A549 (cell line): ENCODE measurements at regions of chr5 and their contacts with region 1.

Region 1: GRCh38 chr5:119411935-119412602 is 40.2 kb upstream of the HSD17B4 start:
- DNase-seq: peak; percentile 67 to 78
- ATAC-seq: peak; percentile 97 to 98
- H3K4me3 ChIP-seq: peak overlapping the region; percentile 49
- H3K27ac ChIP-seq: peak overlapping the region; percentile 73 to 85
- H3K4me1 ChIP-seq: peaks cover 14% of the 10 kb centered on the region; the same call in 2 of the 3 replicates
- CTCF ChIP-seq: peak; percentile 99
- EP300 ChIP-seq: no peak
- POLR2A ChIP-seq: no peak
- RAD21 ChIP-seq: peak; percentile 94 to 97

Region 2: DNA sequence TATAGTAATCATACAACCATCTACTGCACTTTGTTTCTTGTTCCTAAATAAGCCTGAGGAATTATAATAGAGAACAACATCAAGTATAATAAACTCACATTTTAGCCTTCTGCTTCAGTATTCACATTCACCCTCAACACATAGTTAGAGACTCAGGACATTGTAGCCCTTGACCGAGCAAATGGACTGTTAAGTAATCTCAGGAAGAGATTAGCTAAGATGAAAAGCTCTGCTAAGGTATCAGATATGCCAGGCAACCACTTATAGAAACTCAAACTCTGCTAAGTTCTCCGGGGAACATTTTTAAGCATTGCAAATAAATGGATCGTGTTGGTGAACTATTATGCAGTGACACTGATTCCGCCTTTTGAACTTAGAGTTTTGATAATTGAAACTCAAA is 675.7 kb before region 1 on chr5:
- CTCF ChIA-PET with region 1: no interaction called
- POLR2A ChIA-PET with region 1: no interaction called
- DNase-seq: no peak
- ATAC-seq: no peak
- H3K4me3 ChIP-seq: no peak overlapping the region
- H3K27ac ChIP-seq: no peak overlapping the region
- H3K4me1 ChIP-seq: no peaks in the 10 kb centered on the region
- CTCF ChIP-seq: no peak
- EP300 ChIP-seq: no peak
- POLR2A ChIP-seq: no peak
- RAD21 ChIP-seq: no peak

Region 3: DNA sequence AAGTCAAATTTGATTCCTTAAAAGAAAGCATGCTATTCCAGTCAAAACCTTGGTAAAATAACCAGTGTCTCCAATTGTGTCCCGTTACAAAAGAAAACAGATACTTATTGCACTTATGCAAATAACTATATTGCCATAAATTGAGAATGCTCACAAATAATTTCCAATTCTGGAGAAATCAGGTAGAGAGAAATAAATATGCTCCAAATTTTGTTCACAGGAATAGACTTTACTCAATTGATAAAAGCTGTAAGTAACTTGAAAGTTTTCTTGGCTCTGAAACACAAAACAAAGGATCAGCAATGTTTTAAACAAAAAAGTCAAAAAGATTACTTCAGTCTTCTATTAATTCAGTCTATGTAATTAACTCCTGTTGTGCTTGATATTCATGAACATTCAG is 416.0 kb before region 1 on chr5:
- CTCF ChIA-PET with region 1: interaction called, 173 read pairs
- POLR2A ChIA-PET with region 1: no interaction called
- DNase-seq: no peak
- ATAC-seq: no peak
- H3K4me3 ChIP-seq: no peak overlapping the region
- H3K27ac ChIP-seq: no peak overlapping the region
- H3K4me1 ChIP-seq: no peaks in the 10 kb centered on the region
- CTCF ChIP-seq: no peak
- EP300 ChIP-seq: no peak
- POLR2A ChIP-seq: no peak
- RAD21 ChIP-seq: no peak

Region 4: DNA sequence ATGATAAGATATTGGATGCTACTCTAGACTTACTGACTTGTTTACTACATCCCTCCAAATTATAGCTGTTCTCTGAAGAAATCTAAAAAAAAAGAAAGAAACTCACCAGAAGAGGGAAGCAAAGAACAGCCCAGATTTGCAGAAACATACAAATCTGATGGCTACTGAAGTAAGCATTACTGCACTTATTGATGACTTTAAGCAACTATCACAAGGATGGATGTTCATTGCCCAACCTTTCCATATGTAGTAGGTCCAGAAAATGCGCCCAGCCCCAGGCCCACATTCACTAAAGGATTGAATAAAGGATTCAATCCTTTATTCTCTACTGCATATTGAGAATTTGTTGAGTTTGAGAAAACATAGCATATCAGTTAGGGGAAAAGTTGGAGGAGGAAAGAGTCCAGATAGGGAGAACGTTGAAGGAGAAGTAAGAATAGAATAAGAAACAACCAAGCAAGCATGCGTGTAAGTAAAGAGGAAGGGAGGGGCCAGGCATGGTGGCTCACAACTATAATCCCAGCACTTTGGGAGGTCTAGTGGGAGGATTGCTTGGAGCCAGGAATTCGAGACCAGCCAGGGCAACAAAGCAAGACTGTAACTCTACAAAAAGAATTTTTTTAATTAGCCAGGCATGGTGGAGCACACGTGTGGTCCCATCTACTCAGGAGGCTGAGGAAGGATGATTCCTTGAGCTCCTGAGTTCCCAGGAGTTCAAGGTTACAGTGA is 389.9 kb before region 1 on chr5:
- CTCF ChIA-PET with region 1: interaction called, 47 read pairs
- POLR2A ChIA-PET with region 1: no interaction called
- DNase-seq: peak; percentile 18 to 55
- ATAC-seq: peak; percentile 84 to 90
- H3K4me3 ChIP-seq: no peak overlapping the region
- H3K27ac ChIP-seq: no peak overlapping the region
- H3K4me1 ChIP-seq: peaks cover 14% of the 10 kb centered on the region
- CTCF ChIP-seq: peak; percentile 71
- EP300 ChIP-seq: no peak
- POLR2A ChIP-seq: no peak
- RAD21 ChIP-seq: peak; percentile 83 to 85

Region 5: DNA sequence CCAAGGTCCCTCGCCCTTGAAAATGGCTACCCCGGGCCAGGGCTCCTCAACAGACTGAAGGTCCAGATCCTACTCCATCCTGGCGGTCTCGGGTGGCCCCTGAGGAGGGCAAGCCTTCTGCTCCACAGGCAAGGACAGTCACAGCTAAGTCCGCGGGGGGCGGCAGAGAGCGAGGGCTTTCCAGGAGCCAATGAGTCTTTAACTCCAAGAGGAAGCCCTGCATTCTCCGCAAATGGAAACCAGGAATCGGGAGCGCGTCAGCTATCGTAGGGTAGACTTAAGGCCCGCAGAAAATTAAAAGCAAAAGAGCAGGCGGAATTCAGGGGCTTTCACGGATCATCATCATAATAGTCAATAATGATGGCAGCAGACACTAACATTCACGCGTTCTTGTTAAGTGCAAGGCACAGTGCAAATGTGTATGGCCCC is 144.1 kb before region 1 on chr5:
- CTCF ChIA-PET with region 1: interaction called, 10 read pairs
- POLR2A ChIA-PET with region 1: interaction called, 5 read pairs
- DNase-seq: peak; percentile 46 to 84
- ATAC-seq: peak; percentile 77 to 79
- H3K4me3 ChIP-seq: peak overlapping the region; percentile 69
- H3K27ac ChIP-seq: peak overlapping the region; percentile 86 to 93
- H3K4me1 ChIP-seq: peaks cover 34% of the 10 kb centered on the region
- CTCF ChIP-seq: no peak
- EP300 ChIP-seq: no peak
- POLR2A ChIP-seq: no peak
- RAD21 ChIP-seq: no peak

Region 6: GRCh38 chr5:119322948-119323537 is 89.0 kb before region 1 on chr5:
- CTCF ChIA-PET with region 1: interaction called, 10 read pairs
- POLR2A ChIA-PET with region 1: no interaction called
- DNase-seq: peak in 1 of 2 experiments; percentile 45
- ATAC-seq: peak in 1 of 2 experiments; percentile 11; a peak in 2 of 6 replicates
- H3K4me3 ChIP-seq: no peak overlapping the region
- H3K27ac ChIP-seq: peak overlapping the region; percentile 86 to 93
- H3K4me1 ChIP-seq: peaks cover 60% of the 10 kb centered on the region
- CTCF ChIP-seq: no peak
- EP300 ChIP-seq: no peak
- POLR2A ChIP-seq: no peak
- RAD21 ChIP-seq: no peak

Region 7: DNA sequence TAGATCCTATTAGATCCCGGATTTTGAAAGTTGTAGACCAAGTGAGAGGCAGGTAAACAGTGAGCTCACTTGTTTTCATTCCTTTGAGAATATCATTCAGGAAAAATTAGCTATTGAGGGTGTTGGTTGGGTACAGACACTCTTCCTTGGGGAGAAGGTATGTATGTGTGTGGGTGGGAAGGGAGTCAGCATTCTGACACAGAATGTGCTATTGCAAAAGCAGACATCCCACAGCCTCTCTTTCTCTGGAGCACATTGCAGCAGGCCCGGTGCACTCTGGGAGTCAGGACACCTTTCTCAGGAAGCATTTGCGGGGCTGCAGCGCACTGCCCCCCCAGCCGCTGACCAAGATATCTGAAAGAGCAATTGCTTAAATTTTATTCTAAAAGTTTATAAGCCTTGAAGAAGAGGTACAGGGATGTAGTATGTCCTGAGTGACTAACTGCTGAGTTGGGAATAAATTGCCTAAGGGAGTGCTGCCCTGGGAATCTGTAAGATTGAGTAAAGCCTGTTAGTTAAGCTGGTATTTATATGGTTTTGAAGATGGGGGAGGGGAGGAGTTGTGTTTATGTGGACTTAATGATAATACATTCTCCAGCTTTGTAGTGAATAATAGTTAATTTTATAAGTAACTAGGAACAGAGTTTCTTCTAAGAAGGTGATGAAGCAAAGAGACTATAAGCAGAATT is 51.0 kb before region 1 on chr5:
- CTCF ChIA-PET with region 1: interaction called, 11 read pairs
- POLR2A ChIA-PET with region 1: no interaction called
- DNase-seq: no peak
- ATAC-seq: no peak; a peak in 1 of 6 replicates
- H3K4me3 ChIP-seq: no peak overlapping the region
- H3K27ac ChIP-seq: no peak overlapping the region
- H3K4me1 ChIP-seq: peaks cover 22% of the 10 kb centered on the region
- CTCF ChIP-seq: no peak
- EP300 ChIP-seq: no peak
- POLR2A ChIP-seq: no peak
- RAD21 ChIP-seq: no peak

Region 8: DNA sequence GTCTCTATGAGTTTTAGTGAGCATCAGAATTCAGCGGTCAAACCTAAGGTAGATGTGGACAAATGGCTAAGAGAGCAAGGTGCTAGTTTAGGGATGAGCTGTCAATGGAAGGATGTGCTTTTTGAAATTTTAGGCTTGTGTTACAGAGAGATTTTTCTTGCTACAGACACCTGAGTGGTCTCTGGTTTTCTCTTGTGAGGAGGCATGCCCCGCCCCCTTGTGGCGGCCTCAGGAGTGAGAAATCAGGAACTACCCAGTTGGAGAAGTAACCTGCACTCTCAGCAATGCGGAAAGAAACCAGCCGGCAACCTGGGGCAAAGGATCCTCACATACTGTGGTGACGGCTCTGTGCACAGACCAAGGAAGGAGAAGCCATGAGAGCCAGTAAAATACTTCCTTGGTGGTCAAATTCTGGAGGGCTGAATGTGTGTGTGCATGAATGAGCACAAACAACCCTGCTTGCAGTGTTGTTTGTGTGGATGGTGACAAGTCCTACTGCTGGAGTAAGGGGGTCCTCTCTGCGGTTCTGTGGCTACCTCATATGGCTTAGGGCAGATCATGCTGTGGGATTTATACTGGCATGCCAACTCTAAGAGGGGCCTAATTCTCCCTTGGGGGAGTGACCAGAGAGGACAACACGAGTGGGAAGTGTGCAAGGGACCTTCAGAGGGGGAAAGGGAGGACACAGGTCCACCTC is 23.5 kb after region 1 on chr5:
- CTCF ChIA-PET with region 1: interaction called, 10 read pairs
- POLR2A ChIA-PET with region 1: no interaction called
- DNase-seq: peak; percentile 33 to 72
- ATAC-seq: peak; percentile 87 to 89
- H3K4me3 ChIP-seq: no peak overlapping the region
- H3K27ac ChIP-seq: no peak overlapping the region
- H3K4me1 ChIP-seq: no peaks in the 10 kb centered on the region; the same call in 2 of the 3 replicates
- CTCF ChIP-seq: peak; percentile 57
- EP300 ChIP-seq: no peak
- POLR2A ChIP-seq: no peak
- RAD21 ChIP-seq: peak; percentile 59 to 64

Region 9: DNA sequence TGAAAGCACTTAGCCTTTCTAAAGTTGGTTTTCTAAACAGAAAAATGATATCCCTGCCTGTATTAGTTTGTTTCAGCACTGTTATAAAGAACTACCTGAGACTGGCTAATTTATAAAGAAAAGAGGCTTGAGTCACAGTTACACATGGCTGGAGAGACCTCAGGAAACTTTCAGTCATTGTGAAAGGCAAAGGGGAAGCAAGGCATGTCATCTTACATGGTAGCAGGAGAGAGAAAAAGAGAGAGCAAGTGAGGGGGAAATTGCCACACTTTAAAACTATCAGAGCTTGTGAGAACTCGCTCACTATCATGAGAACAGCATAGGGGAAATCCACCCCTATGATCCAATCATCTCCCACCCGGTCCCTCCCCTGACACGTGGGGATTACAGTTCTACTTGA is 282.2 kb after region 1 on chr5:
- CTCF ChIA-PET with region 1: no interaction called
- POLR2A ChIA-PET with region 1: no interaction called
- DNase-seq: no peak
- ATAC-seq: no peak
- H3K4me3 ChIP-seq: no peak overlapping the region
- H3K27ac ChIP-seq: no peak overlapping the region
- H3K4me1 ChIP-seq: no peaks in the 10 kb centered on the region
- CTCF ChIP-seq: no peak
- EP300 ChIP-seq: no peak
- POLR2A ChIP-seq: no peak
- RAD21 ChIP-seq: no peak